Heart right ventricle (tissue), 16 donors: ENCODE measurements at regions of chr6 and their contacts with region 1.

Region 1: DNA sequence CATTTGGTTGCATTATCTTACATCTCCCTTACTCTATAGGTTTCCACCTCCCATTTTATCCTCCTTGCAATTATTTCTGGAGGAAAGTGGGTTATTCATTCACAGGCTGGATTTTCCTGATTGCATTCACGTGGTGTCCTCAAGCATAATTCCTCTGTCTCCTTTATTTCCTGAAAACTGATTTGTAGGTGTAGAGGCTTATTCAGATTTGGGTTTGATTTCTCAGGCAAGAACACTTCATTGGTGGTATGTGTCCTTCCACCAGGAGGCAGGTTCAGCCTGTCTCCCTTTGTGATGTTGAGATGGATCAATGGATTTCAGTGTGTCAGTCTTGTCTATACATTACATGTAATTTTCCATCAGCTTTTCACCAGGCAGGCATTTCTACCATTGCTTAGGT is 17.3 kb downstream of the DNPH1 start:
- DNase-seq: no peak
- ATAC-seq: no peak
- H3K4me3 ChIP-seq: no peak overlapping the region
- H3K27ac ChIP-seq: no peak overlapping the region
- H3K4me1 ChIP-seq: no peaks in the 10 kb centered on the region
- H3K27me3 ChIP-seq: no peaks in the 10 kb centered on the region
- CTCF ChIP-seq: no peak

Region 2: GRCh38 chr6:43240950-43241349 is 29.0 kb after region 1 on chr6:
- intact Hi-C with region 1: loop called in 1 of 10 experiments (anchors 2 kb)
- DNase-seq: no peak
- ATAC-seq: no peak
- H3K4me3 ChIP-seq: no peak overlapping the region
- H3K27ac ChIP-seq: no peak overlapping the region
- H3K4me1 ChIP-seq: no peaks in the 10 kb centered on the region
- H3K27me3 ChIP-seq: peaks cover 0 to 90% (median 70%) of the 10 kb centered on the region in 7 donors
- CTCF ChIP-seq: no peak